Activated CD4-positive, alpha-beta T cell treated with anti-CD3 and anti-CD28 coated beads, Interleukin-2, amount 10 ng/mL, durations not matched to agents 24 days and 14 days (primary cell): ENCODE measurements at regions of chr17 and their contacts with region 1.

Region 1: GRCh38 chr17:48997083-48997826 is at the start of gene IGF2BP1:
- DNase-seq: peak; percentile 69
- H3K4me3 Mint-ChIP-seq: peak within 1 kb of the TSS; percentile 69
- H3K27ac Mint-ChIP-seq: peak within 1 kb of the TSS; percentile 63
- H3K4me1 Mint-ChIP-seq: peaks cover 19% of the 10 kb centered on the region
- H3K27me3 Mint-ChIP-seq: peaks cover 83% of the 10 kb centered on the region
- total RNA-seq, gene IGF2BP1: 0.09 TPM in 1 of 2 replicates, not detected in the other

Region 2: GRCh38 chr17:48610282-48611211 is 386.7 kb before region 1 on chr17 and contains the start of gene HOXB7:
- intact Hi-C with region 1: loop called (anchors 5 kb)
- DNase-seq: peak; percentile 90
- H3K4me3 Mint-ChIP-seq: peak within 1 kb of the TSS; percentile 89
- H3K27ac Mint-ChIP-seq: peak within 1 kb of the TSS; percentile 56
- H3K4me1 Mint-ChIP-seq: peaks cover 32% of the 10 kb centered on the region
- H3K27me3 Mint-ChIP-seq: peaks cover 76% of the 10 kb centered on the region
- total RNA-seq, gene HOXB7: 0.30 and 0.36 TPM in 2 replicates

Region 3: DNA sequence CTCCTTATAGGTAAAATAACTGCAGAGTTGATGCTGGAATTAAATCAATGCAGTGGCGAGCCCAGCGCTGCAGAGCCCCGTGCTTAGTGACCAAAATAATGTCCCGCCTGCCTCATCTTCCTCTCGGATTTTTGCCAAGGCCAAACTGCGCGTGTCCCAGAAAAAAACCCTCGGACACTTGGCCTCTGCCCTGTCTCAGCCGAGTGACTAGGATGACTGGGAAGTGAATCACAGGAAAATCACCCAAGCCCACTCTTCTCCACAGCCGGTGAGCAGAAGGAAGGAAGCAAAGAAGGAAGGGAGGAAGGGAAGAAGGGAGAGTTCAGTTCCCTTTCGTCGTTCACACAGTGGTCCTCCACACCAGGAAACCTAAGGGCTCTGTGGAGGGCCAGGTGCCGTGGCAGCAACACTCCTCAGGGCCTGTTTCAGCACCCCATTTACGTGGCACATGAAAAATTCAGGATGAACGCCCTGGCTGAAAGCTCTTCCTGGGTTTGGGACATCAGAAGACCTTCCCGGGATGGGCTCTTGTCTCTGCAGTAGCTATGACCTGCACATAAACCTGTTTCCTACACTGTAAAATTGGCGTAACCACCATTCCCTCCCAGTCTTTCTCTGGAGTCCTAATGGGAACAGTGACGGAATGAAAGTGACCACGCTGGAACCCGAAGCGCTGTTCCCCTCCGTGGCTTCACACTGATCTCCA is 243.3 kb before region 1 on chr17:
- intact Hi-C with region 1: loop called (anchors 2 kb)
- DNase-seq: no peak
- H3K4me3 Mint-ChIP-seq: no peak overlapping the region
- H3K27ac Mint-ChIP-seq: peak overlapping the region; percentile 25
- H3K4me1 Mint-ChIP-seq: peaks cover 5% of the 10 kb centered on the region
- H3K27me3 Mint-ChIP-seq: peaks cover 85% of the 10 kb centered on the region

Region 4: DNA sequence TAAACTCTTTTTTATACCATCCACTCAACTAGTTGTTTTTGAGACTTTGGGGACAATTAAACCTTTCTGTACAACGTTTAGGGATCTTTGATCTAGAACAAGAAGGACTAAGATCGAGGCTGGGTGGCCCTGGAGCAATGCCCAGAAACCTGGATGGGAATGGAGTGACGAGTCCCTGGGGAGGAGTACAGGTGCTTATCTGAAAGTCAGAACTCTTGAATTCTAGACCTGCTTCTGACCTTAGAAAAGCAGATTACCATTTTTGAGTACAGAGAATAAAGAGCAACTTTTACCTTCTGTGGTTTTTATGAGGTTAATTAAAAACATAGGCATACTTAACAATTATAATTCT is 71.3 kb before region 1 on chr17:
- intact Hi-C with region 1: no loop called
- DNase-seq: no peak
- H3K4me3 Mint-ChIP-seq: no peak overlapping the region
- H3K27ac Mint-ChIP-seq: no peak overlapping the region
- H3K4me1 Mint-ChIP-seq: peaks cover 10% of the 10 kb centered on the region
- H3K27me3 Mint-ChIP-seq: no peaks in the 10 kb centered on the region

Region 5: DNA sequence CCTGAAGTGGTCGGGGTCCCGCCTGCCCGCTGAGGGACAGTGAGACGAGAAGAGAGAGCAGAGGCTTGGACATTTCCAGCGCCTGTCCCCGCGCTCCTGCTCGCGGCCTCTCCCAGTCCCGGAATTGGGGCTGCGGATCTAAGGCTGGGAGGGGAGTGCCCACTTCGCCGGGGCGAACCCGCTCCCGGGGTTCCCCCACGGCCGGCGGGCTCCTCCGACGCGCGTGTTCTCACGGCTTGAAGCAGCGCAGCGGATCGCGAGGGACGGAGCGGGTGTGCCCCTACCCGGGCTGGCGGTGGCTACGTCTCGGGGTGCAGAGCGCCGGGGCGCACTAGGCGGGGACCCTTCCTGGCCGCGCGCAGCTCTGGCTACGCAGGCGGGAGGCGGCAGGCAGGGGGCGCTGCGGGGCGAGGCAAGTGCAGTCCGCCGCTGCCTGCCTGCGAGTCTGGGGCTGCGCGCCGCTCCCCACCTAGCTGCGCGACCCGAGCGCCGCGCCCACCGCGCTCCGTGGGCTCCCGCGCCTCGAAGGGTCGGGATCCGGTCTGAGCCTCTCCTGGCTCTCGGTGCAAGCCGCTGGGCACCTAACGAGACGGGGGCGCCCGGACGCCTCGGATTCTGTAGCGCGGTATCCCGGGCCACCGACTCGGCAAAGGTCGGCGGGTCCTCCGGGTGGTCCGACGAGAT is 499.1 kb after region 1 on chr17:
- intact Hi-C with region 1: loop called (anchors 5 kb)
- DNase-seq: peak; percentile 96
- H3K4me3 Mint-ChIP-seq: peak overlapping the region; percentile 81
- H3K27ac Mint-ChIP-seq: no peak overlapping the region
- H3K4me1 Mint-ChIP-seq: peaks cover 20% of the 10 kb centered on the region
- H3K27me3 Mint-ChIP-seq: peaks cover 77% of the 10 kb centered on the region

Region 6: GRCh38 chr17:49968380-49969133 is 971.3 kb after region 1 on chr17:
- intact Hi-C with region 1: loop called (anchors 5 kb)
- DNase-seq: peak; percentile 89
- H3K4me3 Mint-ChIP-seq: peak overlapping the region; percentile 87
- H3K27ac Mint-ChIP-seq: peak overlapping the region; percentile 56
- H3K4me1 Mint-ChIP-seq: peaks cover 30% of the 10 kb centered on the region
- H3K27me3 Mint-ChIP-seq: peaks cover 90% of the 10 kb centered on the region